A673 (cell line): ENCODE measurements at regions of chr17 and their contacts with region 1.

Region 1: GRCh38 chr17:75978938-75979704 is at the starts of genes ACOX1 and TEN1:
- DNase-seq: peak; percentile 98
- H3K4me3 ChIP-seq: peak within 1 kb of the TSS; percentile 66
- H3K27ac ChIP-seq: peak within 1 kb of the TSS; percentile 95
- H3K4me1 ChIP-seq: peaks cover 26% of the 10 kb centered on the region
- H3K27me3 ChIP-seq: no peaks in the 10 kb centered on the region
- CTCF ChIP-seq: peak; percentile 43
- total RNA-seq, gene ACOX1: 35.0 and 39.5 TPM in 2 replicates
- total RNA-seq, gene TEN1: 13.3 and 16.2 TPM in 2 replicates

Region 2: GRCh38 chr17:75855310-75856081 is 123.6 kb before region 1 on chr17 and contains the start of gene WBP2:
- CTCF ChIA-PET with region 1: interaction called, 12 read pairs
- POLR2A ChIA-PET with region 1: interaction called, 4 read pairs
- intact Hi-C with region 1: no loop called
- DNase-seq: peak; percentile 100
- H3K4me3 ChIP-seq: peak within 1 kb of the TSS; percentile 63
- H3K27ac ChIP-seq: peak within 1 kb of the TSS; percentile 86
- H3K4me1 ChIP-seq: peaks cover 13% of the 10 kb centered on the region
- H3K27me3 ChIP-seq: no peaks in the 10 kb centered on the region
- CTCF ChIP-seq: peak; percentile 54; the same call in 1 of the 2 replicates
- total RNA-seq, gene WBP2: 70.3 and 87.5 TPM in 2 replicates

Region 3: DNA sequence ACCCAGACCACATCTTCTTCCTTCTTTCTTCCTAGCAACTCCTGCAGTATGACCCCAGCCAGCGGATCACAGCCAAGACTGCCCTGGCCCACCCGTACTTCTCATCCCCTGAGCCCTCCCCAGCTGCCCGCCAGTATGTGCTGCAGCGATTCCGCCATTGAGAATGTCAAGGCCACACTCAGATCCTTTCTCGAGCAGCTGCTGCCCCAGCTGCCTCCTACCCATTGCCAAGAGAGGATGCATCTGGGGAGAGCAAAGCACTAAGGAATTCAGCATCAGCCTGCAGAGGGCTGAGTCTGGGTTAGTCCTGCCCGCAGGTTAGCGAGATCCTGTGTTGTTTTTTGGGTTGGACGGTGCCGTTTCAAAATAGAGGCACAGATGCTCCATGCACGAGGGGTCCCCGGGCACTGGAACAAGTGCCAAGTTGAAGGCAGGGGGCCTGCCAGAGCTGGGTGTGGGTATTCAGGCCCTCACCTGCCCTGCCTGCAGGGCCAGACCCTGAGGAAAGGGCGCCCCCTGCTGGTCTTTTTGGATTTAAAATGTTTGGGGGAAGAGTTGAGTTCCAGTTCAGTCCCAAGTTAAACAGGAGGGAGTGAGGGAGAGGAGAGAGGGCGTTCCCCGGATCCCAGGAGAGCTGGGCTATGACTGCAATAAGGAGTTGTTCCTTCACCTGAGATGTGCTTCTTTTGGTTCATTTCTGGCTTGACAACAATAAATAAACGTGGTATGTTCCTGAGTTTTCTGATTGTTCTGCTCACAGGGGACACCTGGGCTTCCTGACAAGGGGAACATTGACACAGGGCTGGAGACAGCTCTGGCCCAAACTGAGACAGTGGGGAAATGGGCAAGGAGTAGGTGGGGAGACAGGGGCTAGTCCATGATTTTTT is 26.4 kb after region 1 on chr17:
- CTCF ChIA-PET with region 1: interaction called, 13 read pairs
- POLR2A ChIA-PET with region 1: no interaction called
- intact Hi-C with region 1: no loop called
- DNase-seq: peak; percentile 79
- H3K4me3 ChIP-seq: no peak overlapping the region
- H3K27ac ChIP-seq: no peak overlapping the region
- H3K4me1 ChIP-seq: no peaks in the 10 kb centered on the region
- H3K27me3 ChIP-seq: no peaks in the 10 kb centered on the region
- CTCF ChIP-seq: peak; percentile 82

Region 4: DNA sequence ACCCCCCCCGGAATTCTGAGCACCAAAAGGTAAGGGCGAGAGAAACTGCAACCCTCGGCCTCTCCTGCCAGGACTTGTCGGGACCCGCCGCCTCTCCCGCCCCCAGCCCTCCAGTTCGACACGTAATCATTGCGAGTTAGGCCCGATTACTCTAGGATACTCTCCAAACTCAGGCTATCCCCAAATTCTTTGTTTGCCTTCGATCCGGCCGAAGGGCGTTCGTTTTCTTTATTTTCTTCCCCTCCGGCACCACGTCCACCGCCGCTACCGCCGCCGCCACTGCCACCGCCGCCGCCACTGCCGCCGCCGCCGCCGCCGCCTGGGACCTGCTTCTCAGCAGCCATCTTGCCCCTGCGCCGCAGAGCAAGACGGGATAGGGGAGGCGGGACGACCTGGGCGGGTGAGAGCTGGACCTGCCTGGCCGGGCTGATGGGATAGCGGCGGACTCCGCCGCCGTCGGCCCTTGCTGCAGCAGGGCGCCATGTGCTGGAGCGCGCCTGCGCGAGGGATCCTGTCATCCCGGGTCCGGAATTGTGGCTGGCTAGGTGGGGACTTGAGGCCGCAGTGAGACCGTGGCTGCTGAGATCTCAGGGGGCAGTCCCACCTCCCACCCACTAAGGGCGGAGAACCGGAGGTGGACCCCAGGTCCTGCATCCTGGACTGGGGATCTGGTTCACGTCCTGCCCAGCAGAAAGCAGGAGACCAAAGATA is 93.2 kb after region 1 on chr17 and contains the start of gene SRP68:
- CTCF ChIA-PET with region 1: no interaction called
- POLR2A ChIA-PET with region 1: no interaction called
- intact Hi-C with region 1: no loop called
- DNase-seq: peak; percentile 93
- H3K4me3 ChIP-seq: peak within 1 kb of the TSS; percentile 77
- H3K27ac ChIP-seq: peak within 1 kb of the TSS; percentile 88
- H3K4me1 ChIP-seq: peaks cover 18% of the 10 kb centered on the region
- H3K27me3 ChIP-seq: peaks cover 40% of the 10 kb centered on the region
- CTCF ChIP-seq: no peak
- total RNA-seq, gene SRP68: 96.4 and 101 TPM in 2 replicates

Region 5: GRCh38 chr17:76103274-76104139 is 124.4 kb after region 1 on chr17 and contains the start of gene EXOC7:
- CTCF ChIA-PET with region 1: no interaction called
- POLR2A ChIA-PET with region 1: no interaction called
- intact Hi-C with region 1: loop called (anchors 1 kb)
- DNase-seq: peak; percentile 96
- H3K4me3 ChIP-seq: peak within 1 kb of the TSS; percentile 93
- H3K27ac ChIP-seq: peak within 1 kb of the TSS; percentile 85
- H3K4me1 ChIP-seq: peaks cover 10% of the 10 kb centered on the region
- H3K27me3 ChIP-seq: no peaks in the 10 kb centered on the region
- CTCF ChIP-seq: no peak
- total RNA-seq, gene EXOC7: 115 and 117 TPM in 2 replicates